T-cell (primary cell): ENCODE measurements at regions of chr10 and their contacts with region 1.

Region 1: DNA sequence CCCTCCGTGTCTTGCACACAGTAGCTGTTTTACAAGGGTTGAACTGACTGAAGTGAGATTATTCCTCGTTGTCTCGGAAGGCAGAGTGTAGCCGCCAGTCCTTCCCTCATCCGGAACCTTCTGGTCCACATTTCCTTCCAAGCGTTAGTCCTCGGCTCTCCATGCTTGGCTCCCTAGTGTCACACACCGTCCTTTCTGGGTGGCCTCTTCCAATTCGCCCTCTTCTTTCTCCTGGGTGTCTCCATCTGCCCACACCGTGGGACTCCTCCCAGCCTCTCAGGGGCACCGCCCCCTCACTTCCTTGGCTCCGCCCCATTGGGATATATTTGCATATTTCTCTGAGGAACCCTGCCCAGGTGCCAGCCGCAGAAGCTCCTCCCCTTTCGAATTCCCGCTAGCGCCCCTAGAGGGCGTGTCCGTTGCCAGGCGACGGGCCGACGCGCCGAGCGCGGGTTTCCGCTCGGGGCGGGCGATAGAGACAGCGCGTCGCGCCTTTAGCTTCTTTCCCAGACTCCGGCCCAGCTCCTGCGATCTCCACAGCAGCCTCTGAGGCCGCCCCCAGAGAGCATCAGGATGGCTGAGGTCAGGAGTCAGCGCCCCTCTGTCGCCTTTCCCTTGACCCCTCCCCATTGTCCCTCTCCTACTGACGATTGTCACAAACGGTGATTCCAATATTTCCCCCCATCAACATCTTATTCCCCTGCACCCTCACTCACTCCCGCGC is at the start of gene CFAP58:
- DNase-seq: peak; percentile 74 to 96 (median 83)
- ATAC-seq: peak; percentile 84 to 91 (median 90)
- H3K4me3 ChIP-seq: peak within 1 kb of the TSS; percentile 46 to 54
- H3K4me3 Mint-ChIP-seq: peak within 1 kb of the TSS in 1 of 3 donors; percentile 28
- H3K27ac ChIP-seq: peak within 1 kb of the TSS; percentile 42
- H3K27ac Mint-ChIP-seq: peak within 1 kb of the TSS in 1 of 2 donors; percentile 68
- H3K4me1 ChIP-seq: peaks cover 14 to 27% of the 10 kb centered on the region in 2 experiments
- H3K4me1 Mint-ChIP-seq: peaks cover 0 to 6% (median 0%) of the 10 kb centered on the region in 3 donors
- H3K27me3 ChIP-seq: no peaks in the 10 kb centered on the region
- H3K27me3 Mint-ChIP-seq: no peaks in the 10 kb centered on the region
- total RNA-seq, gene CFAP58: not detected

Region 2: GRCh38 chr10:104274762-104275721 is 78.4 kb before region 1 on chr10:
- CTCF ChIA-PET with region 1: interaction called, 16 to 55 read pairs
- POLR2A ChIA-PET with region 1: no interaction called
- DNase-seq: peak in 25 of 35 experiments; percentile 14 to 67 (median 32)
- ATAC-seq: peak; percentile 77 to 90 (median 85)
- H3K4me3 ChIP-seq: peak overlapping the region in 1 of 2 donors; percentile 9
- H3K4me3 Mint-ChIP-seq: peak overlapping the region in 1 of 3 donors; percentile 37
- H3K27ac ChIP-seq: no peak overlapping the region
- H3K27ac Mint-ChIP-seq: no peak overlapping the region
- H3K4me1 ChIP-seq: peaks cover 0 to 9% of the 10 kb centered on the region in 2 experiments
- H3K4me1 Mint-ChIP-seq: peaks cover 4% of the 10 kb centered on the region in 3 donors
- H3K27me3 ChIP-seq: peaks cover 0 to 22% of the 10 kb centered on the region in 2 experiments
- H3K27me3 Mint-ChIP-seq: peaks cover 5 to 11% of the 10 kb centered on the region in 2 donors

Region 3: GRCh38 chr10:104301907-104302690 is 51.4 kb before region 1 on chr10:
- CTCF ChIA-PET with region 1: interaction called, 39 to 89 read pairs
- POLR2A ChIA-PET with region 1: interaction called, 3 to 5 read pairs
- DNase-seq: no peak
- ATAC-seq: no peak
- H3K4me3 ChIP-seq: no peak overlapping the region
- H3K4me3 Mint-ChIP-seq: no peak overlapping the region
- H3K27ac ChIP-seq: no peak overlapping the region
- H3K27ac Mint-ChIP-seq: no peak overlapping the region
- H3K4me1 ChIP-seq: peaks cover 45 to 52% of the 10 kb centered on the region in 2 experiments
- H3K4me1 Mint-ChIP-seq: peaks cover 58 to 67% (median 65%) of the 10 kb centered on the region in 3 donors
- H3K27me3 ChIP-seq: peaks cover 0 to 9% of the 10 kb centered on the region in 2 experiments
- H3K27me3 Mint-ChIP-seq: peaks cover 0 to 10% of the 10 kb centered on the region in 2 donors

Region 4: DNA sequence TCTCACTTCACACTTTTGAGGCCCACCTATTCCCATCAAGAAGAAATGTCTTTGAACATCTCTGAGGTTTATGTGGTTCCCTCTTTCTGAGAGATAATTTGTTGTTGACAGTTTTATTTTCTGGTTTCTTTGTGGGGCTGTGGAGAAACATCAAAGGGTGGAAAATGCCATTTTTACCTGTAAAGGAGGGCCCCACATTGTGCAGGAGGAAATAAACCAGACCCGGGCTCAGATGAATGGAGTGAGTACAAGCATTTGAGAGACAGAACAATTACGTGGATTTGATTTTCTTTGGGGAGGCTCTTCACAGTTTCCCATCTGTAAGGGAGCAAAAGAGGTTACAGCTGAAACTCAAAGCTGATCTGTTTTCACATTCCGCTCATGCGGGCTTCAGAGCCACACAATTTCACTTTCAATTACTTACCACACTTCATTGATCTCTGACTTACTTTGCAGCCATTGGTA is 45.0 kb before region 1 on chr10:
- CTCF ChIA-PET with region 1: interaction called, 39 to 89 read pairs
- POLR2A ChIA-PET with region 1: interaction called, 3 to 5 read pairs
- DNase-seq: peak in 10 of 35 experiments; percentile 23 to 58 (median 36)
- ATAC-seq: peak; percentile 59 to 72 (median 67)
- H3K4me3 ChIP-seq: no peak overlapping the region
- H3K4me3 Mint-ChIP-seq: peak overlapping the region; percentile 52 to 65 (median 53)
- H3K27ac ChIP-seq: peak overlapping the region; percentile 21
- H3K27ac Mint-ChIP-seq: peak overlapping the region; percentile 75 to 83
- H3K4me1 ChIP-seq: peaks cover 61 to 72% of the 10 kb centered on the region in 2 experiments
- H3K4me1 Mint-ChIP-seq: peaks cover 81 to 84% (median 83%) of the 10 kb centered on the region in 3 donors
- H3K27me3 ChIP-seq: no peaks in the 10 kb centered on the region
- H3K27me3 Mint-ChIP-seq: no peaks in the 10 kb centered on the region

Region 5: DNA sequence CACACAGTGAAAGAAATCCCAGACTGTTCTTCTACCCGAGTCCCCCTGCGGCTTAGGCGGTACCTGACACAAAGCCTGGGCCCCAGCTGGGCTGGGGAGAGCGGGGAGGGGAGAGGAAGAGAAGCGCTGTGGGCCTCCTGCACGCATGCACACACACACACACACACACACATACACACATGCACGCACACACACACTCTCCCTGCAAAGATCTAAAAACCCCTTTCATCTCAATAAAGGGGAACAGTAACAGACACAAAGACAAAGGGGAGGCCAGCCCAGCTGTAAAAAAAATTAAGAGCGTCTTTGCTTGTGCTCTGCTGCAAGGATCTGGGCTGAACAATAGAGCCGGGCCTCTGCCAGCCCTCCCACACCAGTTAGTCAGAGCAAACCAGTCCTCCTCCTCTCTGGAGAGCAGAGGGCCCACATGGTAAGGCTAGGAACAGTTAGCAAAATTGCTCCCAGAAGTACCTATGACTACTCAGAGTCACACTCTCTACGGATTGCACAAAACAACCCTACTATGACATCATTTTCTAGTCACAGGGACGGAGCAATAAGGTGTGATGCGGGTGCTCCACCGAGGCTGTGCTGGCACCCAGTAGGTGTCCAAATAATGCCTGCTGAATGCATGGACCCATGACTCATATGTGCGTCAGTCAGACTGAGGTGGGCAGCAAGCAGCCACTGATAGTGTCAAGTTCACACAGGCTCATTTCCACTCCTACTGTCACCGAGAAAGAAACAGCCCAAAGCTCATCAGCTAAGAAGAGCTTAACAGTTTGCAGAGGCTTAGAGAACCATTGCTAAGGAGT is 24.4 kb before region 1 on chr10:
- CTCF ChIA-PET with region 1: interaction called in 1 of 2 experiments, 15 read pairs
- POLR2A ChIA-PET with region 1: interaction called in 1 of 2 experiments, 3 read pairs
- DNase-seq: peak; percentile 53 to 87 (median 72)
- ATAC-seq: peak; percentile 69 to 79 (median 76)
- H3K4me3 ChIP-seq: peak overlapping the region; percentile 41 to 71
- H3K4me3 Mint-ChIP-seq: peak overlapping the region; percentile 70 to 85 (median 72)
- H3K27ac ChIP-seq: peak overlapping the region; percentile 87
- H3K27ac Mint-ChIP-seq: peak overlapping the region; percentile 92 to 98
- H3K4me1 ChIP-seq: peaks cover 86 to 97% of the 10 kb centered on the region in 2 experiments
- H3K4me1 Mint-ChIP-seq: peaks cover 99 to 100% (median 100%) of the 10 kb centered on the region in 3 donors
- H3K27me3 ChIP-seq: no peaks in the 10 kb centered on the region
- H3K27me3 Mint-ChIP-seq: no peaks in the 10 kb centered on the region

Region 6: GRCh38 chr10:104337974-104338735 is 15.3 kb before region 1 on chr10 and contains the start of gene ITPRIP:
- CTCF ChIA-PET with region 1: interaction called, 5 to 30 read pairs
- POLR2A ChIA-PET with region 1: interaction called, 4 to 12 read pairs
- DNase-seq: peak; percentile 50 to 83 (median 65)
- ATAC-seq: peak; percentile 83 to 87 (median 85)
- H3K4me3 ChIP-seq: peak within 1 kb of the TSS; percentile 93 to 97
- H3K4me3 Mint-ChIP-seq: peak within 1 kb of the TSS; percentile 88 to 99 (median 90)
- H3K27ac ChIP-seq: peak within 1 kb of the TSS; percentile 88
- H3K27ac Mint-ChIP-seq: peak within 1 kb of the TSS; percentile 97 to 100
- H3K4me1 ChIP-seq: peaks cover 36 to 46% of the 10 kb centered on the region in 2 experiments
- H3K4me1 Mint-ChIP-seq: peaks cover 49 to 54% (median 50%) of the 10 kb centered on the region in 3 donors
- H3K27me3 ChIP-seq: no peaks in the 10 kb centered on the region
- H3K27me3 Mint-ChIP-seq: no peaks in the 10 kb centered on the region
- total RNA-seq, gene ITPRIP: 16.9 to 98.5 (median 25.0) TPM